ENCODE measurements at regions of chr10 and their contacts with region 1.

Region 1: GRCh38 chr10:101141616-101142532 is 10.8 kb downstream of the TLX1 start:
- DNase-seq: peak; percentile 92
- H3K27ac ChIP-seq: no peak overlapping the region
- CTCF ChIP-seq: peak; percentile 97

Region 2: GRCh38 chr10:100890673-100891317 is 251.1 kb before region 1 on chr10:
- CTCF ChIA-PET with region 1: no interaction called
- POLR2A ChIA-PET with region 1: no interaction called
- DNase-seq: peak; percentile 96
- H3K27ac ChIP-seq: no peak overlapping the region; the same call in 1 of the 2 replicates
- CTCF ChIP-seq: no peak

Region 3: DNA sequence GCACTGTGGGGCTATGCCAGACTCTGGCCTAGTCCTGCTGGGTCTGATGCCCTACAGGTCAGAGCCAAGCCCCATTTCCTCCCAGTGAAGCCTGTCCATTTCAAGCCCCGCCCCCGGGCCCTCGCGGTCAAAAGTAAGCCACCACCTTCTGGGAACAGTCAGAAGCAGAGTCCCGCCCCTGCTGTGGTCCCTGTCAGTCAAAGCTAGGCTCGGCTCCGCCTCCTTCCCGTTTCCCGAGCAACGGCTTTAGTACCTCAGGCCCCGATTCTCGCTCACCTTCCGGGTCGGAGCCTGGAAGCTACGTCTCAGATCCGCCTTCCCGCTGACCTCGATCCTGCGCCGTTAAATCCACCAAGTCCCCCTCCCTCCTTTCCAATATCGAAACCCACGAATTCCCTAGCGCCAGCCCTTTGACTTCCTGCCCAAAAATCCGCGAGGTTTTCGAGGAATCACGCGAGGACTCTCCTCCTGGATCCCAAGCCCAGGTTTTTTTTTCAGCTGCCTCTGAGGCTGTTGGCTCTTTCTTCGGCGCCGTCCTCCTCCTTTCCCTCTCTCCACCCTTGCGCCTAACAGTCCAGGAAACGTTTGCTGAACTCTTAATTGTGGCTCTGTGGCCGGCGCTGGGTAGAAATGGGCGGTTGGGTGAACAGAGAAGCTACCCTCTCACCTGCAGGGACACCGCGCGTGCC is 99.1 kb before region 1 on chr10:
- CTCF ChIA-PET with region 1: interaction called, 16 read pairs
- POLR2A ChIA-PET with region 1: interaction called, 4 read pairs
- DNase-seq: peak; percentile 99
- H3K27ac ChIP-seq: peak overlapping the region; percentile 96
- CTCF ChIP-seq: no peak

Region 4: GRCh38 chr10:101060036-101060950 is 81.6 kb before region 1 on chr10:
- CTCF ChIA-PET with region 1: interaction called, 12 read pairs
- POLR2A ChIA-PET with region 1: interaction called, 4 read pairs
- DNase-seq: peak; percentile 94
- H3K27ac ChIP-seq: peak overlapping the region; percentile 94
- CTCF ChIP-seq: peak; percentile 91

Region 5: DNA sequence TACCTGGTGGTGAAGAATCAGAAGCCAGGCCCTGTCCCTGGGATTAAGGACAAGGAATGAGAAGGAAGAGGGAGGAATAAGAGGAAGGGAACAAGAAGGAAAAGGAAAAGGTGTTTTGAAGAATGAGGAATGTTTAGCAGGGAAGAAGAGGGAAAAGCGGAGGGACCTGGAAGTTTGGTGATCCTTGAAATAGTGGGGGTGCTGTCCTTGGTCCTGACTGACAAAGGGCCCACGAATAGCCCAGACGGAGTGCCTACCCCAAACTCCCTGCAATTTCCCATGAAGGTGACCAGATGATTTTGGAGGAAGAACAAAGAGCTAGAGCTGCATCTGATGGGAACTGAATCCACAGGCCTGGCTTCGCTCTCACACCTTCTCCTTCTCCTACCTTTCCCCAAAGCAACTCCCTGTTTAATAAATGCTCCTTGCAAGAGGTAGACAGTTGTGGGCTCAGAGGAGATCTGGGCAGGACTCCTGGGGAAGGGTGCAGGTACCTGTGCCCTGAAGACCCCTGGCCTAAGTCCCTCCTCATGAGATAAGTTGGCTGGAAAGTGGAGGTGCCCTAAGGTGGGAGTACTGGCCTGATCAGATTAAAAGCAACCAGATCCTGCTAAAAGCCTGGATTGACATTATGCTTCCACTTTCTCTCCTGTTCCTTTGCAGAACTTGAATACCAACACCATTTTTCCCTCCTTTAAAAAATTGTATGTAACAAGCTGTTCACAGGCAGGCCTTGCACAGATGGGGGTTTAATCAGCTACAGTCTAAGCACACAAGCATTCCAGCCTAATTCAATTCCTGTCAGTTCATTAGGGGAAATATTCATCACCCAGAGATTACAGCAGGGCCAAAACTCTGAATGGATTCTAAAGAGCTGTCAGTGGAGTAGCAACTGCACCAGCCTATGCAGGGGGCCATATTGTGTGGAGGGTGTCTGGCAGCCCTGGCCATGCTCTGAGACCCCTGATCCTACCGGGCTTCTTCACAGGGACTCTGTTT is 60.6 kb before region 1 on chr10:
- CTCF ChIA-PET with region 1: interaction called, 19 read pairs
- POLR2A ChIA-PET with region 1: no interaction called
- DNase-seq: peak; percentile 58
- H3K27ac ChIP-seq: no peak overlapping the region
- CTCF ChIP-seq: no peak

Region 6: DNA sequence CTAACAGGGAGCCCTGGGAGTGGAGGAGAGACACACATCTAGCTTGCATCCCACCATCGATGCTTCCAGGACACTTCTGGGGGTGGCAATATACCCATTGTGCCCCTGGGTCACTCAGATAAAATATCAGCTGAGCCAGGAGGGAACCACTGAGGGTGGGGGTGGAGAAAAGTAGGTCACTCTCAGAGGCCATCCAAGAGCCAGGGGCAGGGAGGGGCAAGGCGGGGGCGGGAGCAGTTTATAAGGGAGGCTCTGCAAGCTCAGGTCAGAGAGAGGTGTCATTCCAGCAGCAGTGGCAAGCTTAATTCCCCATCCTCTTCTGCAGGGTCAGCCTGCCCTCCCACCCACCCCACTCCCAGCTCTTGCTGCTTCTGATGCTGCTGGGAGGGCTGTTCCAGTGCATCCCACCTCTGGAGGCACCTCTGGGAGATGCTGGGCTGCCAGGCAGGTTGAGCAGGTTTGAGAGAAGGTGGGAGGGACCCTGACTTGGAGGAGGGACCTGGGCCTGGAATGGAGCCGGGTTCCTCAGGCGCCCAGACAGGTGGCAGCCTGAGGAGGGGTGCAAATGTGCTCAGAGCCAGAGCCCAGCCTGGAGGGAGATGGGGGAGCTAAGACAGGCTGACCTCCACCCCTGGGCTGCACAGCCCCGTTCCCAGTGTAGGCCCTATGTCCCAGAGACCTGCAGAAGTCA is 30.9 kb before region 1 on chr10:
- CTCF ChIA-PET with region 1: interaction called, 10 read pairs
- POLR2A ChIA-PET with region 1: no interaction called
- DNase-seq: peak; percentile 45
- H3K27ac ChIP-seq: no peak overlapping the region
- CTCF ChIP-seq: no peak

Region 7: DNA sequence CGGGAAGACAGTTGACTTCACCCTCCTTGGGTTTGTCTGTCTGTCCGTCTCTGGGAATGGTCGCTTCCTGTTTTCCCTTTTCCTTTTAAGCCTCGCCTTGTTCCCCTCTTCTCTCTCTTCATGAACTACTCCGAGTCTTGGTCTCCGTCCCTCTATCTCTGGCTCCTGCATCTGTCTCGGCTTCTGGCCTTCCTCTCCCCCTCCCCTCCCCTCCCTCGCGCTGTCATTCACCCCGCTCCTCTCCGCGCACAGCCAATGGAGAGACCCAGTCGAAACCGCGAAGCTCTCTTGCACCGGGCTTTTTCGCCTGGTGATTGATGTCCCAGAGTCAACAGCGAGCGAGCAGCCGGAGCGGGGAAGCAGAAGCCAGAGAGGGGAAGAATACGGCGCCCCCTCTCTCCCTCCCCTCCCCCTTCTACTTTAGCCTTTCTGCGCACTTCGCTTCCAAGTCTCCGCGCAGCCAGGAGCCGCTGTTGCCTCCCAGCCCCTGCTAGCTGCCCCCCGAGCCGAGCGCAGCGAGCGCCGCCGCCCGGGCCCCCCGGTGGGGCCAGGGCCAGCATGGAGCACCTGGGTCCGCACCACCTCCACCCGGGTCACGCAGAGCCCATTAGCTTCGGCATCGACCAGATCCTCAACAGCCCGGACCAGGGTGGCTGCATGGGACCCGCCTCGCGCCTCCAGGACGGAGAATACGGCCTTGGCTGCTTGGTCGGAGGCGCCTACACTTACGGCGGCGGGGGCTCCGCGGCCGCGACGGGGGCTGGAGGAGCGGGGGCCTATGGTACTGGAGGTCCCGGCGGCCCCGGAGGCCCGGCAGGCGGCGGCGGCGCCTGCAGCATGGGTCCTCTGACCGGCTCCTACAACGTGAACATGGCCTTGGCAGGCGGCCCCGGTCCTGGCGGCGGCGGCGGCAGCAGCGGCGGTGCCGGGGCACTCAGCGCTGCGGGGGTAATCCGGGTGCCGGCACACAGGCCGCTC is 10.6 kb before region 1 on chr10 and contains the start of gene TLX1:
- CTCF ChIA-PET with region 1: interaction called, 17 read pairs
- POLR2A ChIA-PET with region 1: no interaction called
- DNase-seq: no peak
- H3K27ac ChIP-seq: no peak within 1 kb of the TSS
- CTCF ChIP-seq: no peak

Measured in RWPE1 (cell line).